HCT116 (cell line): ENCODE measurements at regions of chr5 and their contacts with region 1.

Region 1: GRCh38 chr5:65742565-65743231 is 20.7 kb downstream of the NLN start:
- DNase-seq: peak; percentile 45
- ATAC-seq: peak; percentile 80
- H3K4me3 ChIP-seq: no peak overlapping the region
- H3K27ac ChIP-seq: no peak overlapping the region
- H3K4me1 ChIP-seq: peaks cover 6 to 17% of the 10 kb centered on the region in 2 experiments
- H3K27me3 ChIP-seq: no peaks in the 10 kb centered on the region
- CTCF ChIP-seq: peak; percentile 44 to 80 (median 64); a peak in 5 of 6 replicates
- POLR2A ChIP-seq: no peak
- RAD21 ChIP-seq: peak; percentile 88

Region 2: DNA sequence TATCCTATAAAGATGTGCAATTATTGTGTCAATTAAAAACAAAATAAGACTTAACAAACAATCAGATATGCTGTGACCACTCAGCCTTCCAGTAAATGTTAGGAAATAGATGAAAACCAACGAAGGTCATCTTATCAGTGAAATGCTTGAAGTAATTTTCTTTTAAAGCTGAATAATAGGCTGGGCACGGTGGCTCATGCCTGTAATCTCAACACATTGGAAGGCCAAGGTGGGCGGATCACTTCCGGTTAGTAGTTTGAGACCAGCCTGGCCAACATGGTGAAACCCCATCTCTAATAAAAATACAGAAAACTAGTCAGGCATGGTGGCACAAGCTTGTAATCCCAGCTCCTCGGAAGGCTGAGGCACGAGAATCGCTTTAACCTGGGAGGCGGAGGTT is 10.5 kb after region 1 on chr5:
- CTCF ChIA-PET with region 1: no interaction called
- POLR2A ChIA-PET with region 1: no interaction called
- RAD21 ChIA-PET with region 1: no interaction called
- intact Hi-C with region 1: no loop called
- DNase-seq: no peak
- ATAC-seq: no peak
- H3K4me3 ChIP-seq: no peak overlapping the region
- H3K27ac ChIP-seq: no peak overlapping the region
- H3K4me1 ChIP-seq: no peaks in the 10 kb centered on the region
- H3K27me3 ChIP-seq: no peaks in the 10 kb centered on the region
- CTCF ChIP-seq: no peak
- POLR2A ChIP-seq: no peak
- RAD21 ChIP-seq: no peak

Region 3: GRCh38 chr5:65861830-65862241 is 119.1 kb after region 1 on chr5:
- CTCF ChIA-PET with region 1: no interaction called
- POLR2A ChIA-PET with region 1: no interaction called
- RAD21 ChIA-PET with region 1: no interaction called
- intact Hi-C with region 1: loop called (anchors 10 kb)
- DNase-seq: peak; percentile 61
- ATAC-seq: peak; percentile 97
- H3K4me3 ChIP-seq: peak overlapping the region in 1 of 2 experiments; percentile 33; a peak in 2 of 4 replicates
- H3K27ac ChIP-seq: peak overlapping the region; percentile 65; the same call in 1 of the 2 replicates
- H3K4me1 ChIP-seq: peaks cover 16 to 46% of the 10 kb centered on the region in 2 experiments
- H3K27me3 ChIP-seq: no peaks in the 10 kb centered on the region
- CTCF ChIP-seq: no peak
- POLR2A ChIP-seq: no peak
- RAD21 ChIP-seq: no peak

Region 4: GRCh38 chr5:65994117-65994786 is 251.6 kb after region 1 on chr5:
- CTCF ChIA-PET with region 1: no interaction called
- POLR2A ChIA-PET with region 1: no interaction called
- RAD21 ChIA-PET with region 1: no interaction called
- intact Hi-C with region 1: loop called (anchors 10 kb)
- DNase-seq: no peak
- ATAC-seq: no peak
- H3K4me3 ChIP-seq: no peak overlapping the region
- H3K27ac ChIP-seq: no peak overlapping the region
- H3K4me1 ChIP-seq: no peaks in the 10 kb centered on the region
- H3K27me3 ChIP-seq: no peaks in the 10 kb centered on the region
- CTCF ChIP-seq: no peak
- POLR2A ChIP-seq: no peak
- RAD21 ChIP-seq: no peak

Region 5: DNA sequence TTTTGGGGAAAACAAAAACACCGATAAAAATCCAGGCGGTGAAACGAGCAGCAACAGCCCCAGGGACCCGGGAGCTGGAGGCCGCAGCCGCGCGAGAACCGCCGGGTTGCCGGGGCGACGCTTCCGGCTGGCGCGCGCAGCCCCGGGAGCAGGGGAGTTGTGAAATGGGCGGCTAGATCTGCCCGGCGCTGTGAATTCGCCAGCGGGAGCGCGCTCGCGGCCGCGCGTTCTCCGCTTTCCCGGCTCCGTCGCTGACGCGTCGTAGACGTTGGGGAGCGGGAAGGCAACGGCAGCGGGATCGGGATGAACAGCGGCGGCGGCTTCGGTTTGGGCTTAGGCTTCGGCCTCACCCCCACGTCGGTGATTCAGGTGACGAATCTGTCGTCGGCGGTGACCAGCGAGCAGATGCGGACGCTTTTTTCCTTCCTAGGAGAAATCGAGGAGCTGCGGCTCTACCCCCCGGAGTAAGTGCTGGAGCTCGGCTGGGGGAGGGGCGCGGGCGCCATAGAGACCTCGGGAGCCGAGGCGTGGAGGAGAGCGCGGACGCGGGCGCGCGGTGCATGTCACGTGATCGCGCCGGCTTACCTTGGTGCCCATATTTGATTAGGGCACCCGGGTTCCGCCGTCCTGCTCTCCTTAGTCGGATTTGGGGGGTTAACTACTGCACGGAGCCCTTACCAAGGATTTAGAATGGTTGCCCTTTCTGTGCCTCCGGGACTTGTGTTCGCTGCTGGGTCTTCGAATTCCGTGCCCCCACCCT is 401.6 kb after region 1 on chr5 and contains the start of gene SREK1:
- CTCF ChIA-PET with region 1: no interaction called
- POLR2A ChIA-PET with region 1: no interaction called
- RAD21 ChIA-PET with region 1: no interaction called
- intact Hi-C with region 1: loop called (anchors 5 kb)
- DNase-seq: peak; percentile 83
- ATAC-seq: peak; percentile 88
- H3K4me3 ChIP-seq: peak within 1 kb of the TSS; percentile 74 to 84
- H3K27ac ChIP-seq: peak within 1 kb of the TSS; percentile 89
- H3K4me1 ChIP-seq: peaks cover 7 to 19% of the 10 kb centered on the region in 2 experiments; a peak in 3 of 4 replicates
- H3K27me3 ChIP-seq: no peaks in the 10 kb centered on the region
- CTCF ChIP-seq: no peak
- POLR2A ChIP-seq: peak; percentile 91
- RAD21 ChIP-seq: no peak
- total RNA-seq, gene SREK1: 65.6 TPM